Cardiac septum (tissue), 1 donor: ENCODE measurements at regions of chr1 and their contacts with region 1.

Region 1: DNA sequence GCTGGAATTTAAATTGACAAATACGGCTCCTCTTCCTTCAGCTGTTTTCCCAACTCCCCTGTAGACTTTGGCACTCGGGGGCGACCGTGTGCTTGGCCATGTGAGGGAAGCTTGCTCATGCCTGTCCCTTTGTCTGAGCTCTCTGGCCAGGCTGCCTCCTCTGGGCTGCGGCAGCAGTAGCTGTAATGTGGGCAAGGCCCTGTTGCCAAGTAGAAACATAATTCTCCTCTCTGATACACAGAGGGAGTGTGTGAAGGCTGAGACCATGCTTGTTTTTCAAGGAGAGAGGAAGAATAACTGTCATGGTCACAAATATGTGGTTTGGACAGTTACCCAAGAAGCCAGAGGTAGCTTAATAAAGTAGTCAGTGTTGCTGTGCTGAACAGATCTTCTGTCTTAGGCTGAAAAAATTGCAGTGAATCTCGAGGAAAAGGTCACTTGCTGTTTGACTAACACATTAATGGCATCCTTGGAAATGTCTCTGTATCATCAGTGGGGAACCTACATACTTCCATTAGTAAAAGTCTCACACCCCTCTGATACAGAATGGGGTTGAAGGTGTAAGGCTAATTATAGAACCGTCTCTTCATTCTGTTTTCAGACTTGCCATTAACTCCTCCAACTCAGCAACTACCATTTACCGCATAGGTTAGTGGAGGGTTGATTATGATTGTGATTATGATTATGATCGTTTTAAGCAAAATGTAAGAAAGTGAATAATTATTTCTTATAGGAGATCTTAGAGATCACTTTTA is 94.6 kb downstream of the TGFB2 start:
- DNase-seq: no peak

Region 2: GRCh38 chr1:218388591-218388990 is 51.1 kb before region 1 on chr1:
- intact Hi-C with region 1: loop called (anchors 5 kb)
- DNase-seq: no peak